ENCODE measurements at regions of chr4 and their contacts with region 1.

Region 1: DNA sequence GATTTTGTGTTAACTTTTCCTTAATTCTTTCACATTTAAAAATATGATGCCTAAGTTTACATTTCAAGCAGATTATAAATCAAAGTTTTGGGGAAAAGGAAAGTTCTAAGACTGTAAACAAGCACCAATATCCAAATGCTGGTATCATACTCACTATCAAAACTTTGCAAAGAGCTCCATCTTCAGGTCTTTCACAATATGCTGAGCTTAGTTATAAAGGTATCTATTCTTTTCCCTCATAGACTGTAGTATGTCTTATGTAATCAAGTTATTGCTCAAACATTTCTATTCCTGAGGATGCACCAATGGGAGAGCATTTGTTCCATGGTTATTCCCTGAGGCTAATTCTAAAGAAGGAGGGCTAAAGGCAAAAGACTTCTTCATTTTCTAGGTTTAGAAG is 207.9 kb upstream of the FAM241A start:
- DNase-seq: peak; percentile 63
- H3K4me3 ChIP-seq: no peak overlapping the region
- H3K27ac ChIP-seq: no peak overlapping the region
- H3K4me1 ChIP-seq: no peaks in the 10 kb centered on the region
- H3K27me3 ChIP-seq: peaks cover 4% of the 10 kb centered on the region
- CTCF ChIP-seq: peak; percentile 53 to 56

Region 2: DNA sequence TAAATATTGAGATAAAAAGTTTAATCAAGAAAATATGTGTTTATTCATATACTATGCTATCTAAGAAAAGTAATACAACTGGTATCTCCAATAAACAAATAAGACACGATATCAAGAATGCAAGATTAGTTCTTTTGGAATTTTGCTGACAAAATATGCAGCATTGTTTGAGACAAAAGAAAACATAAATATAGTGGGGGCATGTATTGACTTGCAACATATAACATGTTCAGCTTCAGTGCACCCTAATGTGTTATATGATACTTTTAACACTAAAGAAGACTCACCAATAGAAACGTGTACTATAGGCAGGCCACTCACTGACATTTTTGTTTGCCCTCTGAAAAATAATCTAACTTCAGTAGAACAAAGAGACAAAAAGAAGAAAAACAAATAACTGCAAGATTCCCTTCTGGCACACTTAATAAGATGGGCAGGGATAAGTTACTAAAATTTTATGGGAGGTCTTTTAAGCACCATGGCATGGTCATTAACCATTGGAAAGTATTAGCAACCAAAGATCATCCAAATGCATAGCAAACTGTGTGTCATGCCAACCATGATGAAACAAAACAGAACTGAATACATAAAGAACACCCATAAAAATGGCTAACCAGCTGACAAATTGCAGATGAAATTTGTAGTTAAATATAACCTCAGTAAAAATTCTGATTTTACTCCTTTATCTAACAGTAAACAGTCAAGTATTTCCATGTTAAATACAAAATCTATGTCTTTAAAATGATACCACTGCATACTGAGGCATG is 240.0 kb before region 1 on chr4:
- CTCF ChIA-PET with region 1: no interaction called
- dilution Hi-C with region 1: no loop called
- in situ Hi-C with region 1: no loop called
- intact Hi-C with region 1: no loop called
- DNase-seq: no peak
- H3K4me3 ChIP-seq: no peak overlapping the region
- H3K27ac ChIP-seq: no peak overlapping the region
- H3K4me1 ChIP-seq: no peaks in the 10 kb centered on the region
- H3K27me3 ChIP-seq: peaks cover 5% of the 10 kb centered on the region
- CTCF ChIP-seq: no peak

Region 3: DNA sequence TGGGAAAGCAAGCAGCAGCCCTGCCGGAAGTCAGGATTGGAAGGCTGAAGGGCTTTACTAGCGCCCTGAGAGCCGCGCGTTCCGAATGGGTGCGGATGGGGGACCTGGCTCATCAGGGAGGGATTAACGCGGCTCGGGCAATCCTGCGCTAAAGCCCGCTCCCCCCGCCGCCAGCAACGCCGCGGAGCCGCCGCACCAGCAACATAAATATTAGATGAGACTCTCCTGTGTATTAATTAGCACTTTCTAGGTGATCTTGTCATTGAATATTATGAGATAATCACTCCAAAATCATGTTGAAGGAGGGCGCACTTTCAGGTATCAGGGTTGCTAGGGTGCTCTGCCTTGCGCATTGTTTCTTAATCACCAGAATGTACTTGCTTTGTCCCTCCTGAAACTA is 149.3 kb before region 1 on chr4:
- CTCF ChIA-PET with region 1: no interaction called
- dilution Hi-C with region 1: no loop called
- in situ Hi-C with region 1: no loop called
- intact Hi-C with region 1: no loop called
- DNase-seq: no peak
- H3K4me3 ChIP-seq: no peak overlapping the region
- H3K27ac ChIP-seq: no peak overlapping the region
- H3K4me1 ChIP-seq: no peaks in the 10 kb centered on the region
- H3K27me3 ChIP-seq: peaks cover 12% of the 10 kb centered on the region
- CTCF ChIP-seq: no peak

Region 4: GRCh38 chr4:111854494-111855087 is 82.8 kb before region 1 on chr4:
- CTCF ChIA-PET with region 1: interaction called, 9 read pairs
- dilution Hi-C with region 1: no loop called
- in situ Hi-C with region 1: no loop called
- intact Hi-C with region 1: loop called (anchors 2 kb)
- DNase-seq: peak; percentile 16
- H3K4me3 ChIP-seq: no peak overlapping the region
- H3K27ac ChIP-seq: no peak overlapping the region
- H3K4me1 ChIP-seq: no peaks in the 10 kb centered on the region
- H3K27me3 ChIP-seq: peaks cover 3% of the 10 kb centered on the region
- CTCF ChIP-seq: peak; percentile 66 to 68

Region 5: DNA sequence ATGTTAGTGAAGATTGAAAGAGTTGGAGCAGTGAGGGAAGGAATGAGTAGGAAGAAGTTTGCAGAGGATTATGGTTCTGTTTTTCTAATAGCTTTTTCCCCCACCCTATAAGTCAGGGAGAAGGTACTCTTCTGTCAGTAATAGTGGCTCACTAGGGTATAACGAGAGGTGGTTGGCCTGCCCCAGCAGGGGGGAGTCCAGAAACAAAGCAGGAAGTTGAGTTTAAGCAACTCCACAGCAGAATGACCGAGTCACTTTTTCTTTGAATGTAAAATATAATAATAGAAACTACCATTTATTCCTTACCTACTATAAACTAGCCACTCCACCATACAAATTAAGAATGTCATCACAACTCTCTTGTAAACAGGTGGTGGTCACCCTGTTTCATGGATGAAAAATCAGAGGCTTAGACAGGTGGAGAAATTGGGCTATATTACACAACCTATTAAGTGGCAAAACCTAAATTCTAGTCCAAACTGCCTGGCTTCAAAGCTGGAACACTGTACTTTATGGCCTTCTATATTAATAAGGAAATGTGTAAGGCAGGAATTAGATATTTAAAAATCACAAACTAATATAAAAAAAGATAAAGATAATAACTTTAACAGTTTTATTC is 316.1 kb after region 1 on chr4:
- CTCF ChIA-PET with region 1: no interaction called
- dilution Hi-C with region 1: no loop called
- in situ Hi-C with region 1: no loop called
- intact Hi-C with region 1: no loop called
- DNase-seq: no peak
- H3K4me3 ChIP-seq: no peak overlapping the region
- H3K27ac ChIP-seq: no peak overlapping the region
- H3K4me1 ChIP-seq: no peaks in the 10 kb centered on the region
- H3K27me3 ChIP-seq: no peaks in the 10 kb centered on the region
- CTCF ChIP-seq: no peak

Measured in mammary epithelial cell (primary cell).